Activated CD4-positive, alpha-beta T cell treated with anti-CD3 and anti-CD28 coated beads, Interleukin-2, amount 10 ng/mL, durations not matched to agents 24 days and 14 days (primary cell): ENCODE measurements at regions of chr2 and their contacts with region 1.

Region 1: DNA sequence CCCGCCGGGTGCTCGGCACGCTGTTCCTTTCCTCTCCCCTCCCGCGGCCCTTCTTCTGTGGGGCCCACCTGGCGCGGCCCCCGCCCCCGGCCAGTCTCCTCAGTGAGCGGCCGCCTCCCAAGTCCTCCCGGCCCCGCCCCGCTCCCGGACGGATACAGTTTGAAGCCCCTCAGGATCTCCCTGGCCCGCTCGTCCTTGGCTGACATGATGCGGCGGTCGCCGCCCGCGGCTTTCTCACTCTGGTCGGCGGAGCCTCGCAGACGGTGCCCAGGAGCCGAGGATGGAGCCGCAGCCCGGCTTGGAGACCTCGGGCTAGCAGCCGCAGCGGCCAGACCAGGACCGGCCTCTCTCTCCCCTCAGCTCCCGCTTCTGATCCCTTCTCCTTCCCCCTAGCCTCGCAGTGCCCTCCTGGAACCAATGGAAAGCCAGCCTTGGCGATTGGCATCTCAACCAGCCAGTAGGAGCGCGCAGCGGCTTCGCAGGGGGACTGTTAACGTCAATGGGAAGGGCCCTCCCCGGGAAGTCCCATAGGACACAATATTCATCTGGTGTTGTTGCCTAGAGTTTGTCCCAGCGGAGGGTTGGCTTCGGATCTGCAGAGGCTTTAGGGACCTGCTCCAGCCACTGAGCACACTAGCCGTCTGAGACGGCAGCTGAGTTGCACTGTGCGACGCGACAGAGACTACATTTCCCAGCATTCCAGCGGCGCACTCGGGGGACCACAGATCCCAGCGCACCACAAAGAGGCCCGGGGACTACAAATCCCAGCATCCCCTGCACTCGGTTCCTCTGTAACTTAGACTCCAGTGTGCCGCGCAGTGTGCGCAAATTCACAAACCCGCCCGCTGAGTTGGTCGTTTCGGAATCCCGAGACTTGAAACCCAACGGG is at the start of gene PDE6D:
- DNase-seq: peak; percentile 100
- H3K4me3 Mint-ChIP-seq: peak within 1 kb of the TSS; percentile 99
- H3K27ac Mint-ChIP-seq: peak within 1 kb of the TSS; percentile 93
- H3K4me1 Mint-ChIP-seq: peaks cover 53% of the 10 kb centered on the region
- H3K27me3 Mint-ChIP-seq: peaks cover 3% of the 10 kb centered on the region
- total RNA-seq, gene PDE6D: 33.4 and 36.0 TPM in 2 replicates

Region 2: GRCh38 chr2:231463698-231464575 is 317.2 kb before region 1 on chr2 and contains the start of gene NCL:
- intact Hi-C with region 1: loop called (anchors 10 kb)
- DNase-seq: peak; percentile 95
- H3K4me3 Mint-ChIP-seq: peak within 1 kb of the TSS; percentile 93
- H3K27ac Mint-ChIP-seq: peak within 1 kb of the TSS; percentile 100
- H3K4me1 Mint-ChIP-seq: peaks cover 34% of the 10 kb centered on the region
- H3K27me3 Mint-ChIP-seq: no peaks in the 10 kb centered on the region
- total RNA-seq, gene NCL: 1,513 and 1,560 TPM in 2 replicates

Region 3: DNA sequence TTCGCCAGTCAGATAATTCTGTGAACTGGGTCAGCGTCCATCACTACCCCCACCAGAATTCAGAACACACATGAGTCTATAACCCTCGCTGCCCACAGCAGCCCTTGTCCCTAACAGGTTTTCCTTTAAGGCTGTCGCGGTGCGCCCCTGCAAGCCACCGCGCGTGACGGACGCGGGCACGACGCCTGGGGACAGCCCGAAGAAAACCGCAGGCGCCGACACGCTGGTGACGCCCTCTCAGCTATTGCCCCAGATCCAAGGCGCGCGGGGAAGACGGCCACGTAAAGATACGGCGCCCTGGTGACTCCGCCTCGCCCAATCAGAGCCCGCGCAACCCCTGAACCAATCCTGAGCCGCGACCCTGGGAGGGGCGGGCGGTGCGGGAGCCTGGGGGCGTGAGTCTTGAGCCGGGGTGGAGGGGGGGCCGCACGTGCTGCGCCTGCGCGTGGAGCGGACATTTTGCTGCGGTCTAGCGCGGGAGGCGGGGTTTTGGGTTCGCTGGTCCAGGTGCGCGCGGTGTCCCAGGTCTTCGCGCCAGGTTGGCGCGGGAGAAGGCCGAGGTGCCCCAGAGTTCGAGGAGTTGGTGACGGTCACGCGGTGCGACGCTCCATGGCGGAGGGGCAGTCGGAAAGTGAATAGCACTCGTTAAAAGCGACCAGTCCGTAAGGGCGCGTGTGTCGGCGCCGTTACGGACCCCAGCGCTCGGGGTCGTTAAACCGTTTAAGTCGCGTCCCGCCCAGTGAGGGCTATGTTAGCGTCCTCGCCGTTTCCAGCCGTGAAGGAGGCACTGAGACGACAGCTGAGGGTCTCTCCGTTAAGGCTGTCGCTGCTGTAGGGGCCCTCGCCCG is 266.8 kb before region 1 on chr2:
- intact Hi-C with region 1: loop called (anchors 1 kb)
- DNase-seq: peak; percentile 99
- H3K4me3 Mint-ChIP-seq: peak overlapping the region; percentile 94
- H3K27ac Mint-ChIP-seq: peak overlapping the region; percentile 97
- H3K4me1 Mint-ChIP-seq: peaks cover 13% of the 10 kb centered on the region
- H3K27me3 Mint-ChIP-seq: peaks cover 6% of the 10 kb centered on the region

Region 4: GRCh38 chr2:231662028-231662810 is 118.9 kb before region 1 on chr2:
- intact Hi-C with region 1: loop called (anchors 1 kb)
- DNase-seq: peak; percentile 100
- H3K4me3 Mint-ChIP-seq: peak overlapping the region; percentile 70
- H3K27ac Mint-ChIP-seq: peak overlapping the region; percentile 98
- H3K4me1 Mint-ChIP-seq: peaks cover 22% of the 10 kb centered on the region
- H3K27me3 Mint-ChIP-seq: no peaks in the 10 kb centered on the region

Region 5: GRCh38 chr2:231713730-231714430 is 67.3 kb before region 1 on chr2:
- intact Hi-C with region 1: loop called (anchors 2 kb)
- DNase-seq: peak; percentile 96
- H3K4me3 Mint-ChIP-seq: peak overlapping the region; percentile 79
- H3K27ac Mint-ChIP-seq: peak overlapping the region; percentile 95
- H3K4me1 Mint-ChIP-seq: peaks cover 22% of the 10 kb centered on the region
- H3K27me3 Mint-ChIP-seq: no peaks in the 10 kb centered on the region

Region 6: DNA sequence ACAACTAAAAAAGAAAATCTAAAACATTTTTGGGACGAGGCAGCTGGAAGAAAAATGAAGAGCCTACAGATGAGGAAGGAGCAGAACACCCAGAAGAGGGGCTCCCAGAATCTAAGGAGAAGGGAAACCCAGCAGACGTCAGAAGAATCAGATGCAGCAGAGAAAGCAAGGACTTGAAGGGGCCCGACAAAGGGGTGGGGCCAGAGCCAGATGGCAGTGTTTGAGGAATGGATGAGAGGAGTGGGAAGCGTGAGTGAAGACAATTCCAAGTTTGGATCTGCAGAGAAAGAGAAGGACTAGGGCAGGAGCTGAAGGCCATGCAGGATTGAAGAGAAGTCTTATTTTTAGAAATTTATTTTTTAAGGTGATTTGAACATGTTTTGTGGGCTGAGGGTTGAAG is 53.5 kb before region 1 on chr2:
- intact Hi-C with region 1: no loop called
- DNase-seq: no peak
- H3K4me3 Mint-ChIP-seq: no peak overlapping the region
- H3K27ac Mint-ChIP-seq: no peak overlapping the region
- H3K4me1 Mint-ChIP-seq: no peaks in the 10 kb centered on the region
- H3K27me3 Mint-ChIP-seq: no peaks in the 10 kb centered on the region

Region 7: GRCh38 chr2:231961349-231962166 is 180.4 kb after region 1 on chr2 and contains the start of gene DIS3L2:
- intact Hi-C with region 1: loop called (anchors 1 kb)
- DNase-seq: peak; percentile 94
- H3K4me3 Mint-ChIP-seq: peak within 1 kb of the TSS; percentile 92
- H3K27ac Mint-ChIP-seq: peak within 1 kb of the TSS; percentile 94
- H3K4me1 Mint-ChIP-seq: peaks cover 22% of the 10 kb centered on the region
- H3K27me3 Mint-ChIP-seq: peaks cover 2% of the 10 kb centered on the region
- total RNA-seq, gene DIS3L2: 27.8 and 29.5 TPM in 2 replicates